Caki2 (cell line): ENCODE measurements at regions of chr6 and their contacts with region 1.

Region 1: GRCh38 chr6:106444777-106445507 is 84.4 kb downstream of the CRYBG1 start:
- DNase-seq: peak; percentile 49

Region 2: DNA sequence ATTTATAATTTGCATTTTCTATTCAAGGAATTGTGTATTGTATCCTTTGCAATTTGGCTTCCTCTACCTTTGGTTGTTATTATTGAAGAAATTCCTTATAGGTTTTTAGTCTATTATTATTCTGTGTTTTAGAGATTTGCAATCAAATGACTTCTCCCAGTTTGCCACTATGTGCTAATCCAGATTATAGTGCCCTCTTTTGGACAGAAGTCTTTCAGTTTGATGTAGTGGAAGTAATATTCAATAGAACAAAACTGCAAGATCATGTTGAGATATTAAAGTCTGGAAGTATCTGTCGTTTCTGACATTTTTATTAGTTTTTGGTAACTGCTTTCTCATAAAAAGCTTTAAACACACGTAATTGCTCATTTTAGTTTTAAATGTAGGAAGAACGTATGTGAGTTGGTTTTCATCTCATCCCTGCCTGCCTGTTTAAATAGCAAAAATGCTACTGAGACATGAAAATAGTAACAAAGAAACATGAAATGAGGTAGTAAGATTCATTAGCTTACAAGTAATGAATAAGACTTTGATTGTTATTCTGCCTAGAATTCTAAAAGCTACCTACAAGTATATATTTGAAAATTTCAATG is 111.5 kb after region 1 on chr6:
- in situ Hi-C with region 1: loop called (anchors 25 kb)
- DNase-seq: peak; percentile 25